Panc1 (cell line): ENCODE measurements at regions of chr17 and their contacts with region 1.

Region 1: GRCh38 chr17:13002766-13003451 is 14.9 kb downstream of the ELAC2 start:
- DNase-seq: no peak
- ATAC-seq: peak; percentile 92
- H3K4me3 ChIP-seq: no peak overlapping the region
- H3K27ac ChIP-seq: no peak overlapping the region
- H3K4me1 ChIP-seq: no peaks in the 10 kb centered on the region
- H3K27me3 ChIP-seq: no peaks in the 10 kb centered on the region
- CTCF ChIP-seq: peak; percentile 87

Region 2: GRCh38 chr17:12256380-12256995 is 746.4 kb before region 1 on chr17:
- CTCF ChIA-PET with region 1: no interaction called
- POLR2A ChIA-PET with region 1: no interaction called
- in situ Hi-C with region 1: no loop called
- intact Hi-C with region 1: loop called (anchors 10 kb)
- DNase-seq: peak; percentile 32
- ATAC-seq: no peak
- H3K4me3 ChIP-seq: no peak overlapping the region
- H3K27ac ChIP-seq: no peak overlapping the region
- H3K4me1 ChIP-seq: no peaks in the 10 kb centered on the region
- H3K27me3 ChIP-seq: peaks cover 2% of the 10 kb centered on the region; the same call in 1 of the 2 replicates
- CTCF ChIP-seq: peak; percentile 71; the same call in 1 of the 2 replicates